ENCODE measurements at regions of chr10 and their contacts with region 1.

Region 1: GRCh38 chr10:50347394-50347802 is 96.1 kb upstream of the ASAH2 start:
- DNase-seq: no peak
- ATAC-seq: peak; percentile 89
- H3K4me3 Mint-ChIP-seq: peak overlapping the region; percentile 36
- H3K27ac Mint-ChIP-seq: peak overlapping the region; percentile 81
- H3K4me1 Mint-ChIP-seq: peaks cover 26% of the 10 kb centered on the region
- H3K27me3 Mint-ChIP-seq: no peaks in the 10 kb centered on the region
- CTCF ChIP-seq: no peak

Region 2: DNA sequence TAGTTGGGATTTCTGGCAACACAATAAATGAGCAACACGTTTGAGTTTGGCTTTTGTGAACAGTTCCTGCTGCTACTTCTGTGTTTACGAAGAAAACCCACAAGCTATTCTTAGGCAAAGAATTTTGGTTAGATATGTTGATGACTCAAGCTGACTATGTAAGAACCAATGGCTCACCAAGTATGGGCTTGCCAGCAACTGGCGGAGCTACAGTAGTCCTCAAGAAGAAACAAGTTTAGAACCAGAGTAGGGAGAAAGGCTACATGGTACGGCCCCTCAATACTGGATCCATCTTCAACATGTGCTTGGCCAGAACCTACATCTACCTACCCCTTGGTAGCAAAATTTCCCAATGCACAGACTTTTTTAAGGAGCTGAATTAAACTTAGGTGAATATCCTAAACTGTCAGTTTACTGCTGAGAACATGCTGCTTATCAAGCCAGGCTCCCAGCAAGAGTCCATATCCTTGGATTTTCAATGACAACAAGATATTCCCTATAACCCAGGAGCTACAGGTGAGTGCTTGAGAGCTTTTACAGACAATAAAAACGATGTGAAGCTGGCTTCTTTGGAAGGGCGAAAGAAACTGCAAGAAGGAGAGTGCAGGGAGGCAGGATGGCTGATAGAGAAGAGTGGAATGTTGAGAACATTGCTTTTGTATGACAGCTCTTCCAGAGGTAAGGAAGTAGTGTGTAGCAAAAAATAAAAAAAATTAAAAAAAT is 21.8 kb before region 1 on chr10:
- CTCF ChIA-PET with region 1: no interaction called
- POLR2A ChIA-PET with region 1: no interaction called
- intact Hi-C with region 1: loop called (anchors 2 kb)
- DNase-seq: no peak
- ATAC-seq: peak; percentile 40
- H3K4me3 Mint-ChIP-seq: no peak overlapping the region
- H3K27ac Mint-ChIP-seq: no peak overlapping the region
- H3K4me1 Mint-ChIP-seq: peaks cover 34% of the 10 kb centered on the region
- H3K27me3 Mint-ChIP-seq: no peaks in the 10 kb centered on the region
- CTCF ChIP-seq: no peak

Region 3: DNA sequence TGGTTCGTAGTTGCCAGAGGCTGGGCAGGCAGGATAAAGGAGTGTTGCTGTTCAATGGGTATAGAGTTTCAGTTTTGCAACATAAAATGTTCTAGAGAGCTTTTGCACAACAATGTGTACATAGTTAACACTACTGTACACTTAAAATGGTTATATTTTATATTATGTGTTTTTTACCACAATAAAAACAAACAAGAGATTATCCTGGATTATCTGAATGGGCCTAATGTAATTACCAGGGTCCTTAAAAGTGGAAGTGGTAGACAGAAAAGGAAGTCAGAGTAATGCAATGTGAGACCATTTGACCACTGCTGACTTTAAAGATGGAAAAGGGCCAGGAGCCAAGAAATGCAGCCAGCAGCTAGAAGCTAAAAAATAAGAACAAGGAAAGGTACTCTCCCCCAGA is 116.6 kb after region 1 on chr10:
- CTCF ChIA-PET with region 1: no interaction called
- POLR2A ChIA-PET with region 1: no interaction called
- intact Hi-C with region 1: no loop called
- DNase-seq: no peak
- ATAC-seq: no peak
- H3K4me3 Mint-ChIP-seq: no peak overlapping the region
- H3K27ac Mint-ChIP-seq: no peak overlapping the region
- H3K4me1 Mint-ChIP-seq: peaks cover 20% of the 10 kb centered on the region
- H3K27me3 Mint-ChIP-seq: no peaks in the 10 kb centered on the region
- CTCF ChIP-seq: no peak

Region 4: GRCh38 chr10:50540069-50540825 is 192.8 kb after region 1 on chr10:
- CTCF ChIA-PET with region 1: no interaction called
- POLR2A ChIA-PET with region 1: no interaction called
- intact Hi-C with region 1: no loop called
- DNase-seq: no peak
- ATAC-seq: peak; percentile 66
- H3K4me3 Mint-ChIP-seq: peak overlapping the region; percentile 54
- H3K27ac Mint-ChIP-seq: peak overlapping the region; percentile 65
- H3K4me1 Mint-ChIP-seq: peaks cover 69% of the 10 kb centered on the region
- H3K27me3 Mint-ChIP-seq: no peaks in the 10 kb centered on the region
- CTCF ChIP-seq: no peak

Region 5: GRCh38 chr10:51301644-51302043 is 954.2 kb after region 1 on chr10:
- CTCF ChIA-PET with region 1: no interaction called
- POLR2A ChIA-PET with region 1: no interaction called
- intact Hi-C with region 1: no loop called
- DNase-seq: no peak
- ATAC-seq: no peak
- H3K4me3 Mint-ChIP-seq: no peak overlapping the region
- H3K27ac Mint-ChIP-seq: no peak overlapping the region
- H3K4me1 Mint-ChIP-seq: no peaks in the 10 kb centered on the region
- H3K27me3 Mint-ChIP-seq: no peaks in the 10 kb centered on the region
- CTCF ChIP-seq: no peak

Measured in activated B cell treated with CpG ODN at 0.5 μM for 24 hours (primary cell).